B cell (primary cell): ENCODE measurements at regions of chr22 and their contacts with region 1.

Region 1: DNA sequence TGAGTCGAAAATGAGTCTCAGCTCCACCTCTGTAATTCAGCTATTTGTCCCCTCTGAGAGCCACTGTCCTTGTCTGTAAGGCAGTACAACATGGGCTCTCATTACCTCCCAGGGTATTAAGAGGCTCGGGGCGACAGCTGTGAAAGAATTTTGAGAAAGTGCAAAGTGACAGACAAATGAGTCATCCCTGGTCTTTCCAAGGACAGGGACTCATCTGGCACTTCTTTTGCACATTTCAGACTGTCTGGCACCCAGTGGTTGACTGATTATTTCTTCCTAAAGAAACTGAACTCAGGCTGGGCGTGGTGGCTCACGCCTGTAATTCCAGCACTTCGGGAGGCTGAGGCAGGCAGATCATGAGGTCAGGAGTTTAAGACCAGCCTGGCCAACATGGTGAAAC is 62.1 kb upstream of the ARFGAP3 start:
- DNase-seq: no peak
- ATAC-seq: no peak
- H3K4me3 ChIP-seq: no peak overlapping the region
- H3K4me3 Mint-ChIP-seq: no peak overlapping the region
- H3K27ac ChIP-seq: peak overlapping the region in 1 of 2 donors; percentile 26
- H3K27ac Mint-ChIP-seq: peak overlapping the region; percentile 15
- H3K4me1 ChIP-seq: peaks cover 29 to 56% of the 10 kb centered on the region in 2 donors
- H3K4me1 Mint-ChIP-seq: peaks cover 49% of the 10 kb centered on the region
- H3K27me3 ChIP-seq: no peaks in the 10 kb centered on the region
- H3K27me3 Mint-ChIP-seq: no peaks in the 10 kb centered on the region
- CTCF ChIP-seq: no peak

Region 2: DNA sequence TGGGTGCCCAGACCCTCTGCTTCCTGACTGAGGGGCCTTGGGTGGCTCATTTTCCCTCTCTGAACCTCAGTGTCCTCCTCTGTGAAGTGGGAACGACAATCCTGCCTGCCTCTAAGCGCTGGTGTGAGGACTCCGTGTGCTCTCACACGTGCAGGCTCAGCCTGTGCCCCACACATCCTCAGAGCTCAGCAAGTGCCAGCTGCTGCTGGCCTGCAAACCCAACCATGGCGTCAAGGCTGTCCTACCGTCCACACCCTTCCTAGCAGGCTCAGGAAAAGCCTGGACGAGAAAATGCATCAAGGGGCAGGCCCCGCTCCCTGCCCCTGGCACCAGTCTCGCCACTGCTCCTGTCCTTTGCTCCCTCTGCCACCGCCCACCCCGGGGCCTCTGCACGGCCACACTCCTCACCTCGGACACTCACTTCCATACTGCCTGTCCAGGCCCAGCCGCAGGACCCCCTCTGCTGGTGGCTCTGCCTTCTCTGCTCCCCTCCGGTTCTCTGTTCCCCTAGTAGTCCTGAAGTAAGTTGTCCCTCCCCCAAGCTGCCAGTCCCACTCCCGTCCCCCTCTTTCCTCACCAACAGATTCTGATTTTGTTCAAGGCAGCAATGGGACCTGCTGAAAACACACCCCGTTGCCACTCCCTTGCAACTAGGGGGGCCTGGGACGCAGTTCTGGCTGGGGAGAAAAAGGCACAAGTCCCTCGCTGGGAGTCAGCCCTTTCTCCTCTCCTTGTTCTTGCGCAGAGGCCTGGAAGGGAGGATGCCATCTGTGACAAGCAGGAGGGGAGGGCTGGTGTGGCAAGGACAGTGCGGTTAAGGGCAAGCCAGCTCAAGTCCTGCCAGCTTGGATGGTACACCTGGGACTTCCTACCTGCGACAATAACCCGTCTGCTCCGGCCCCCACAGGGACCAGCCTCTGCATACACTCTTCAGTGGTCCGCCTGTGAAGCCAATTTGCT is 124.4 kb before region 1 on chr22:
- CTCF ChIA-PET with region 1: no interaction called
- POLR2A ChIA-PET with region 1: no interaction called
- intact Hi-C with region 1: no loop called
- DNase-seq: no peak
- ATAC-seq: no peak
- H3K4me3 ChIP-seq: no peak overlapping the region
- H3K4me3 Mint-ChIP-seq: no peak overlapping the region
- H3K27ac ChIP-seq: no peak overlapping the region
- H3K27ac Mint-ChIP-seq: no peak overlapping the region
- H3K4me1 ChIP-seq: no peaks in the 10 kb centered on the region
- H3K4me1 Mint-ChIP-seq: no peaks in the 10 kb centered on the region
- H3K27me3 ChIP-seq: no peaks in the 10 kb centered on the region
- H3K27me3 Mint-ChIP-seq: no peaks in the 10 kb centered on the region
- CTCF ChIP-seq: no peak

Region 3: GRCh38 chr22:42937164-42937843 is 18.1 kb after region 1 on chr22:
- CTCF ChIA-PET with region 1: no interaction called
- POLR2A ChIA-PET with region 1: no interaction called
- intact Hi-C with region 1: no loop called
- DNase-seq: peak; percentile 78
- ATAC-seq: peak; percentile 69
- H3K4me3 ChIP-seq: peak overlapping the region in 4 of 5 experiments; percentile 24 to 42 (median 32)
- H3K4me3 Mint-ChIP-seq: peak overlapping the region; percentile 76
- H3K27ac ChIP-seq: peak overlapping the region; percentile 61 to 81
- H3K27ac Mint-ChIP-seq: peak overlapping the region; percentile 86
- H3K4me1 ChIP-seq: peaks cover 66 to 79% of the 10 kb centered on the region in 2 donors
- H3K4me1 Mint-ChIP-seq: peaks cover 72% of the 10 kb centered on the region
- H3K27me3 ChIP-seq: no peaks in the 10 kb centered on the region
- H3K27me3 Mint-ChIP-seq: no peaks in the 10 kb centered on the region
- CTCF ChIP-seq: no peak

Region 4: GRCh38 chr22:42959576-42960509 is 40.6 kb after region 1 on chr22:
- CTCF ChIA-PET with region 1: interaction called, 3 read pairs
- POLR2A ChIA-PET with region 1: no interaction called
- intact Hi-C with region 1: loop called (anchors 10 kb)
- DNase-seq: no peak
- ATAC-seq: no peak
- H3K4me3 ChIP-seq: no peak overlapping the region
- H3K4me3 Mint-ChIP-seq: no peak overlapping the region
- H3K27ac ChIP-seq: no peak overlapping the region
- H3K27ac Mint-ChIP-seq: no peak overlapping the region
- H3K4me1 ChIP-seq: peaks cover 13 to 30% of the 10 kb centered on the region in 2 donors
- H3K4me1 Mint-ChIP-seq: peaks cover 50% of the 10 kb centered on the region
- H3K27me3 ChIP-seq: no peaks in the 10 kb centered on the region
- H3K27me3 Mint-ChIP-seq: no peaks in the 10 kb centered on the region
- CTCF ChIP-seq: no peak

Region 5: DNA sequence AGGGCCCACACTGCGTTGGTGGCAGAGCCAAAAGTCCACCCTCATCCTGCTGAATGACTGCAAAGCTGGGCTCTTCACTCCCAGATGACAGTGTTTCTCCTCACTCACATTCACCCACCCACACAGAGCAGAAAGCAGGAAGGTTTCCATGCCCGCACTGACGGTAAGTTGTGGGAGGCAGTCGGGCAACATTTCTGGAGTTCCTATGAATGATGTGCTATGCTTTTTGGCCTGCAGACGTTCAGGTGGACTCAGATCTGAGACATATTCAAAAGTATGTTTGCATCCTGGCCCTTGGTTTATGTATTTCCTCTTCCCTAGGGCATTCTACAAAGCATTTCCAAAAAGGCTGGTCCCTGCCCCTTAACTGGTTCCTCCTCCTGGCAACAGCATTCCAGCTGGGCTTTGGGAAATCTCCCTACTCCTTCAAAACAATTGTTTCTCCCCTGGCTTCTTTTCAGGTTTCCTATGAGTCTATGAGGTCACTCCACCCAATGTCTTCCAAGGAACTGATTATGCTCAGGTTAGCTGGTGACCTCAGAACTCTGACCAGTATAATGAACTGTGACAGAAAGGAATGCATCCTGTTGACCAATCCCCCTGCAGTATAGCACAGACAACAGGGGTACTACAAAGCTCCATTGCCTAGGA is 59.4 kb after region 1 on chr22:
- CTCF ChIA-PET with region 1: no interaction called
- POLR2A ChIA-PET with region 1: no interaction called
- intact Hi-C with region 1: no loop called
- DNase-seq: no peak
- ATAC-seq: no peak
- H3K4me3 ChIP-seq: no peak overlapping the region
- H3K4me3 Mint-ChIP-seq: no peak overlapping the region
- H3K27ac ChIP-seq: peak overlapping the region in 1 of 2 donors; percentile 25
- H3K27ac Mint-ChIP-seq: peak overlapping the region; percentile 2
- H3K4me1 ChIP-seq: peaks cover 15 to 20% of the 10 kb centered on the region in 2 donors
- H3K4me1 Mint-ChIP-seq: peaks cover 41% of the 10 kb centered on the region
- H3K27me3 ChIP-seq: no peaks in the 10 kb centered on the region
- H3K27me3 Mint-ChIP-seq: no peaks in the 10 kb centered on the region
- CTCF ChIP-seq: no peak